ENCODE measurements at regions of chr17 and their contacts with region 1.

Region 1: GRCh38 chr17:76278952-76279741 is 14.0 kb downstream of the UBALD2 start:
- DNase-seq: peak; percentile 82 to 94 (median 91)
- H3K4me3 ChIP-seq: no peak overlapping the region
- H3K27ac ChIP-seq: no peak overlapping the region
- H3K4me1 ChIP-seq: peaks cover 1% of the 10 kb centered on the region
- H3K27me3 ChIP-seq: no peaks in the 10 kb centered on the region
- CTCF ChIP-seq: peak; percentile 85 to 96 (median 90)
- EP300 ChIP-seq: no peak
- POLR2A ChIP-seq: no peak

Region 2: DNA sequence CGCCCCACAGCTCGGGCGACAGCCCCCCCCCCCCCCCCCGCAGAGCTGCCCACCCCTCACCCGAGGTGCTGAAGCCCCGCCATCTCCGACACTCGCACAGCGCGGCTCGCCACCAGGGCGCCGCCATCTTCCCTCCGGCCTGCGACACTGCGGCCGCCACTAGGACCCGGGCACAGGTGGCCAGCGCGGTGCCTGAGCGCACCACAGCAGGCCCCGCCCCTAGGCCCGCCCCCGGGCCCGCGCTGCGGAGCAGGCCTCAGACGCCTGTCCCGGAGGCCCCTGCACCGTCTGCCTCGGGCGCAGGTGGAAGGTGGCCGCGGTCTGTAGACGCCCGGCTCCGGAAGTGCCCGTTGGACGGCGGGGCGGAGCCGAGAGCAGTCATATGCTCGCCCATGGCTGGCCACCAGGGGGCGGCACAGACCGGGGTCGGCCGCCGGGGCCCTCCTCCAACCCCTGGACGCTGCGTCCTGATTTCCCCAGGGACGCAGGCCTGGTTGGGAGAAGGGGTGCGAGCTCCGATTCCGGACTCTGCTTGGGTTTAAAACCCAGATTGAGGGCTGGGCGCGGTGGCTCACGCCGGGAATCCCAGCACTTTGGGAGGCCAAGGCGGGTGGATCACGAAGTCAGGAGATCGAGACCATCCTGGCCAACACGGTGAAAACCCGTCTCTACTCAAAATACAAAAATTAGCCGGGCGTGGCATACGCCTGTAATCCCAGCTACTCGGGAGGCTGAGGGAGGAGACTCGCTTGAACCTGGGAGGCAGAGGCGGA is 374.2 kb before region 1 on chr17 and contains the start of gene MRPL38:
- intact Hi-C with region 1: loop called in 1 of 4 experiments (anchors 10 kb)
- DNase-seq: peak; percentile 93 to 95 (median 94)
- H3K4me3 ChIP-seq: peak within 1 kb of the TSS; percentile 71
- H3K27ac ChIP-seq: peak within 1 kb of the TSS; percentile 81 to 86
- H3K4me1 ChIP-seq: peaks cover 2% of the 10 kb centered on the region
- H3K27me3 ChIP-seq: no peaks in the 10 kb centered on the region
- CTCF ChIP-seq: peak; percentile 98 to 100 (median 100)
- EP300 ChIP-seq: no peak
- POLR2A ChIP-seq: peak; percentile 66
- total RNA-seq, gene MRPL38: 30.4 to 93.0 (median 83.4) TPM

Region 3: GRCh38 chr17:76014184-76014924 is 264.8 kb before region 1 on chr17:
- intact Hi-C with region 1: loop called in 2 of 4 experiments (anchors 5 to 10 kb)
- DNase-seq: peak; percentile 70 to 80 (median 74)
- H3K4me3 ChIP-seq: no peak overlapping the region
- H3K27ac ChIP-seq: no peak overlapping the region
- H3K4me1 ChIP-seq: no peaks in the 10 kb centered on the region
- H3K27me3 ChIP-seq: no peaks in the 10 kb centered on the region
- CTCF ChIP-seq: peak; percentile 87 to 91 (median 87)
- EP300 ChIP-seq: no peak
- POLR2A ChIP-seq: no peak

Region 4: DNA sequence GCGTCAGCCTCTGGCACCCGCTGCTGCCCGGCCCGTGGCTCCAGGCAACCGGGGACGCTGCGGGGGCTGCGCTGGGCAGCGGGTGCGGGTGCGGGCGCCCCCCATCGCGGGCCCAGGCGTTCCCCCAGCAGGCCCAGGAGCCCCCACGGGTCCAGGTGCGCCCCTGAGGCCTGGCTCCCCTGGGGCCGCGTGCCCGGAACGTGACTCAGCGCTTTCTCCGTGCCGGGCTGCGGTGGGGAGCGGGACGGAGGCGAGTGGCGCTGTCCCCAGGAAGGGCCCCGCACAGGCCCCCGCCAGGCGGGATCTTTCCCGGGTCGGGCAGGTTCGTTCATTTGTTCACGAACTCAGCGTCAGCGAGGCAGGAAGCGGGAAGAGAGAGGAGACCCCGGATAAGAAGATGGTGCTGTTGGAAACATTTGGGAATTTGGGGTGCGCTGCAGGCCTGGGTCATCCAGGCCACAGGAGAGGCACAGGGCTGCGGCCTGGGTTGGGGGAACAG is 157.2 kb before region 1 on chr17:
- intact Hi-C with region 1: loop called (anchors 1 to 5 kb)
- DNase-seq: peak in 2 of 5 donors; percentile 45 to 48
- H3K4me3 ChIP-seq: peak overlapping the region; percentile 19
- H3K27ac ChIP-seq: no peak overlapping the region
- H3K4me1 ChIP-seq: peaks cover 2% of the 10 kb centered on the region
- H3K27me3 ChIP-seq: no peaks in the 10 kb centered on the region
- CTCF ChIP-seq: no peak
- EP300 ChIP-seq: no peak
- POLR2A ChIP-seq: no peak

Region 5: GRCh38 chr17:76182016-76182764 is 97.0 kb before region 1 on chr17:
- intact Hi-C with region 1: loop called in 1 of 4 experiments (anchors 10 kb)
- DNase-seq: peak; percentile 79 to 93 (median 89)
- H3K4me3 ChIP-seq: no peak overlapping the region
- H3K27ac ChIP-seq: no peak overlapping the region
- H3K4me1 ChIP-seq: no peaks in the 10 kb centered on the region
- H3K27me3 ChIP-seq: no peaks in the 10 kb centered on the region
- CTCF ChIP-seq: peak; percentile 51 to 88 (median 84)
- EP300 ChIP-seq: no peak
- POLR2A ChIP-seq: no peak